OCI-LY7 (cell line): ENCODE measurements at regions of chr3 and their contacts with region 1.

Region 1: DNA sequence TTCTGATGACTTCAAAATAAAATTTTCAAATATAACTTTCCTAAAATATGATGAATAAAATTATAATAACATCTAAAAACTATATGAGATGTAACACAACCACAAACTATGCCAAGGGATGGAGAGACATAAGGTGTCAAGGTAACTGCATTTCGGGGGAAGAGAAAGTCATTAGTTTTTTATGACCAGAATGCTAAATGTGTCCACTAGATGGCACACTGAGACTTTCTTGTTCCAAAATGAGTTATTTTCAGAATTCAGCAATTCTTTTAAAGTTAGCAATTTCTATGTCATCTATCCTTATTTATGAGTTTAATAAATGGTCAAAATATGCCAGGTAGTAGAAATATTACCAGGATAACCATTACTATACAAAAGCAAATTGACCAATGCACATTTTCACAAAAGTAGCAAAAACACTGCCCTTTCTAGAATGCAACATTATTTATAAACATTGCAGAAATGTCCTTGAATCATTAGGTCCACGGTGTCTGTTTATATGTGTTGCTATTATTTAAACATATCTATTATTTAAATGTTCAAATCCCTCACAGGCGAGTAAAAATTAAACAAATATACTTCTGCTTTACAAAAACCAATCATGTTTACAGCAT is 374.2 kb downstream of the PLCL2 start:
- DNase-seq: peak; percentile 64
- H3K4me3 ChIP-seq: no peak overlapping the region
- H3K27ac ChIP-seq: no peak overlapping the region
- H3K4me1 ChIP-seq: no peaks in the 10 kb centered on the region
- CTCF ChIP-seq: peak; percentile 94

Region 2: DNA sequence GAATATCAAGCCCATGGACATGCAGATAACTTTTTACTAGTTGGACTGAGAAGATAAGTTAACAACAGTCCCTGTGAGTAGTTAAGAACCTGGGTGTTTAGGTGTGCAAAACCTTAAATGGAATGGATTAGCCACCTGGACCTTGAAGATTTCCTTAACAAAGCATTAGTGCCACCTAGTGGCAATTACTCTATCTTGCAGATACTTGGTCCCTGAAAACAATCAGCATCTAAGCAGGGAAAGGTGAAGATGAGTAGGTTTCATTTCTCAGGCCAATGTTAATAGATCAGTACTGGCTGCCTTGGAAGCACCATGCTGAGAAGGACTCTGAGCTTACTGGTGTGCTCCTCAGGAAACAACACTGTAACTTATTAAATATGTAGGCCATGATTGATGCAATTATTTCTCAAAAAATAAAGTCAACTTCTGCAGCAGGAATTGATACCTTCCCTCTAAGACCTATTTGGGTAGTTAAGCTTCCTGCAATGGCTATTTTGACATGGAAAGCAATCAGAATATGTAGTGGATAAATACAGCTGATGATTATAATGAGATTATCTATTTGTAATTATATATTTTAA is 154.1 kb after region 1 on chr3:
- CTCF ChIA-PET with region 1: no interaction called
- POLR2A ChIA-PET with region 1: no interaction called
- intact Hi-C with region 1: loop called (anchors 1 kb)
- DNase-seq: peak; percentile 79
- H3K4me3 ChIP-seq: no peak overlapping the region
- H3K27ac ChIP-seq: no peak overlapping the region
- H3K4me1 ChIP-seq: no peaks in the 10 kb centered on the region
- CTCF ChIP-seq: peak; percentile 92